CD8-positive, alpha-beta T cell (primary cell): ENCODE measurements at regions of chr11 and their contacts with region 1.

Region 1: DNA sequence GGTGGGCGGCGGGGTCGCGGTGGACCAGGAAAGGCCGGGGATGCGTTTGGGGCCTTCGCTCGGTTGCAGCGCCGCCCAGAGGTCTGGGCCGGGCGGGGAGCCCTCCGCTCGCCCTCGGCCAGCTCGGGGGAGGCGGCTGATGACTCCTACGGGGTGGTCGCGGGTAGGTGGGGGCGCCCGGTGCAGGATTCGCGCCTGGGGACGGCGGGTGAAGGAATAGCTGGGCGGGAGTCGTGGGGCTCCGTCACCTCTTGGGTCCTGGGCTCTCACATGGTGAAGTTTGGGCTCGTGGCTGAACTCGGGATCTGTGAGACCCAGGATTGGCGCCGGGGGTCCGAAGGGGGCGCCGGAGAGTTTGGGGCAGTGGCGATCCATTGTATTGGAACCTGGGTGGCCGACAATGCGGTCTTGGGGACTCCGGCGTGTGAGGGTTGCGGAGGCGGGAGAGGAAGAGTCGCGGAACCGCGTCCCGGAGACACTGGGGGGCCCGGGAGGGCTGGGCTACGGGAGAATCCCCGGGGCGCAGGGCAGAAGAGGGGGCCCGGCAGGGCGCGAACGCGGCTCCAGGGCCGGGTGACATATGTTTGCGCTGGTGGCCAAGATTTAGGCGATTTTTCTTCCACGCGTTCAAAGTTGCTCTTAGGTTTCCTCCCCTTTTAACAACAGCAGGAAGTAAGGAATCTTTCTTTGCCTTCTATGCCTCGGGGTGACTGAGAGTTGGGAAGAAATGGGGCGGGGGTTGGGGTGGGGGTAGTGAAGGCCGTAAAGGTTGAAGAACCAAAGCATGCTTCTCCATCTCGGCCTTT is 935 bp downstream of the QSER1 start:
- DNase-seq: peak in 8 of 9 experiments; percentile 21 to 75 (median 54)
- ATAC-seq: peak; percentile 50
- H3K4me3 ChIP-seq: peak overlapping the region; percentile 79 to 87
- H3K4me3 Mint-ChIP-seq: peak overlapping the region; percentile 92
- H3K27ac ChIP-seq: peak overlapping the region; percentile 36 to 51
- H3K27ac Mint-ChIP-seq: peak overlapping the region; percentile 74
- H3K4me1 ChIP-seq: peaks cover 27% of the 10 kb centered on the region
- H3K4me1 Mint-ChIP-seq: peaks cover 33% of the 10 kb centered on the region
- H3K27me3 ChIP-seq: no peaks in the 10 kb centered on the region
- H3K27me3 Mint-ChIP-seq: no peaks in the 10 kb centered on the region
- CTCF ChIP-seq: peak; percentile 35

Region 2: GRCh38 chr11:31369348-31370329 is 1523.9 kb before region 1 on chr11 and contains the starts of genes DCDC1 and DNAJC24:
- CTCF ChIA-PET with region 1: no interaction called
- POLR2A ChIA-PET with region 1: no interaction called
- intact Hi-C with region 1: loop called (anchors 2 to 10 kb)
- DNase-seq: peak; percentile 84 to 96 (median 94)
- ATAC-seq: peak; percentile 95
- H3K4me3 ChIP-seq: peak within 1 kb of the TSS; percentile 73 to 93
- H3K4me3 Mint-ChIP-seq: peak within 1 kb of the TSS; percentile 100
- H3K27ac ChIP-seq: peak within 1 kb of the TSS; percentile 59 to 84
- H3K27ac Mint-ChIP-seq: peak within 1 kb of the TSS; percentile 98
- H3K4me1 ChIP-seq: peaks cover 30% of the 10 kb centered on the region
- H3K4me1 Mint-ChIP-seq: peaks cover 59% of the 10 kb centered on the region
- H3K27me3 ChIP-seq: peaks cover 0 to 5% of the 10 kb centered on the region in 2 experiments
- H3K27me3 Mint-ChIP-seq: no peaks in the 10 kb centered on the region
- CTCF ChIP-seq: no peak
- total RNA-seq, gene DCDC1: 0.19 TPM in 1 of 2 experiments, not detected in the other
- total RNA-seq, gene DNAJC24: 7.0 to 7.3 TPM

Region 3: DNA sequence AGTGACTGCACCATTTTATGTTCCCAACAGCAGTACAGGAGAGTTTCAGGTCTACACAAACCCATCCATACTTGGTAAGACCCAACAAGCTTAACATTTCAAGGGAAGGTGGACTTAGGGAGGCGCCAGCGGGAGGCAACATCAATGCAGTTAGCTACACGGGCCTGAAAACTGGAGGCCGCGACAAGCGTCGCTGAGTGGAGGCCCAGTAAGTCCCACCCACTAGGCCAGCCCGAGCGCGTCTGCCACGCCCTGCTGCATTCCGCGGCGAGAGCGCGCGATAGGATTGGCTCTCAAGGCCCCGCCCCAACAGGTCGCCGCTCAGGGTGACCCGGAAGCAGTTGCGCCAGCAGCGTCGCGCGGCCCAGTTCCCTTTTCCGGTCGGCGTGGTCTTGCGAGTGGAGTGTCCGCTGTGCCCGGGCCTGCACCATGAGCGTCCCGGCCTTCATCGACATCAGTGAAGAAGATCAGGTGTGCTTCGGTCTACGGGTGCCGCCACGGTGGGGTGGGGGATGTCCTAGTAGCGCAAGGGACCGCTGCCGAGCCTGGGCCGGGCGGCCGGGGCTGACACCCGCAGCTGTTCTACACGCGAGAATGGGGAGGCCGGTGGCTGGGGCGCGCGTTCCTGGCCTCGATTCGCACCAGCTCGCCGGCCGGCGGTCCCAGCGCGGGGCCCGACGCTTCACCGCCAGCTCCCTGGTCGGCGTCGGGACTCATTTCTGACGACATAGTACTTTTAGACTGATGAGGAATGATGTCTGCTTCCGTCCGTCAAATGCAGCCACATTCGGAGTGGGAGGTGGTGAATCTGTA is 309.9 kb before region 1 on chr11 and contains the start of gene EIF3M:
- CTCF ChIA-PET with region 1: no interaction called
- POLR2A ChIA-PET with region 1: interaction called, 4 read pairs
- intact Hi-C with region 1: loop called (anchors 1 to 5 kb)
- DNase-seq: peak; percentile 91 to 98 (median 95)
- ATAC-seq: peak; percentile 98
- H3K4me3 ChIP-seq: peak within 1 kb of the TSS; percentile 80 to 93
- H3K4me3 Mint-ChIP-seq: peak within 1 kb of the TSS; percentile 99
- H3K27ac ChIP-seq: peak within 1 kb of the TSS; percentile 81 to 86
- H3K27ac Mint-ChIP-seq: peak within 1 kb of the TSS; percentile 99
- H3K4me1 ChIP-seq: peaks cover 29% of the 10 kb centered on the region
- H3K4me1 Mint-ChIP-seq: peaks cover 39% of the 10 kb centered on the region
- H3K27me3 ChIP-seq: no peaks in the 10 kb centered on the region
- H3K27me3 Mint-ChIP-seq: no peaks in the 10 kb centered on the region
- CTCF ChIP-seq: no peak
- total RNA-seq, gene EIF3M: 269 to 274 TPM

Region 4: DNA sequence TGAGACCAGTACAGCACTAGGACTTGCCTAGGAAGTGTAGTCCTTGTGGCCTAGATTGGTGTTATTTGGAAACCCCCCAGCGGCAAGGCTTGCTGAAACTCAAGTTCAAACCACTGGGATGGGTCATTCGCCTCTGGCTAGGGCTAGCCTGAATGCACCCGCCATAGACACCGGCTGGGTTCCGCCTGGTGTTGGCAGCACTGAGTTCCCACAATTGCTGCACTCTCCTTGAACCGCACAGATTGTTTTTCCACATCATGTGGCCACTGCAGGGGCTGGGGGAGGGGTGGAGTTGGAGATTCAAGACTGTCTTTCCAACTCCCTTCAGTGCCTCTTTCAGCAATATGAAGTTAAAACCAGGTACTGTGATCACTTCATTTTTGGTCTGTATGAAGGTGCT is 142.2 kb before region 1 on chr11:
- CTCF ChIA-PET with region 1: no interaction called
- POLR2A ChIA-PET with region 1: no interaction called
- intact Hi-C with region 1: no loop called
- DNase-seq: no peak
- ATAC-seq: no peak
- H3K4me3 ChIP-seq: no peak overlapping the region
- H3K4me3 Mint-ChIP-seq: no peak overlapping the region
- H3K27ac ChIP-seq: no peak overlapping the region
- H3K27ac Mint-ChIP-seq: no peak overlapping the region
- H3K4me1 ChIP-seq: no peaks in the 10 kb centered on the region
- H3K4me1 Mint-ChIP-seq: no peaks in the 10 kb centered on the region
- H3K27me3 ChIP-seq: no peaks in the 10 kb centered on the region
- H3K27me3 Mint-ChIP-seq: peaks cover 18% of the 10 kb centered on the region
- CTCF ChIP-seq: no peak

Region 5: GRCh38 chr11:32870676-32871075 is 22.9 kb before region 1 on chr11:
- CTCF ChIA-PET with region 1: no interaction called
- POLR2A ChIA-PET with region 1: no interaction called
- intact Hi-C with region 1: no loop called
- DNase-seq: peak in 7 of 9 experiments; percentile 6 to 52 (median 40)
- ATAC-seq: no peak
- H3K4me3 ChIP-seq: no peak overlapping the region
- H3K4me3 Mint-ChIP-seq: no peak overlapping the region
- H3K27ac ChIP-seq: no peak overlapping the region
- H3K27ac Mint-ChIP-seq: no peak overlapping the region
- H3K4me1 ChIP-seq: no peaks in the 10 kb centered on the region
- H3K4me1 Mint-ChIP-seq: no peaks in the 10 kb centered on the region
- H3K27me3 ChIP-seq: no peaks in the 10 kb centered on the region
- H3K27me3 Mint-ChIP-seq: peaks cover 10% of the 10 kb centered on the region
- CTCF ChIP-seq: peak; percentile 23

Region 6: DNA sequence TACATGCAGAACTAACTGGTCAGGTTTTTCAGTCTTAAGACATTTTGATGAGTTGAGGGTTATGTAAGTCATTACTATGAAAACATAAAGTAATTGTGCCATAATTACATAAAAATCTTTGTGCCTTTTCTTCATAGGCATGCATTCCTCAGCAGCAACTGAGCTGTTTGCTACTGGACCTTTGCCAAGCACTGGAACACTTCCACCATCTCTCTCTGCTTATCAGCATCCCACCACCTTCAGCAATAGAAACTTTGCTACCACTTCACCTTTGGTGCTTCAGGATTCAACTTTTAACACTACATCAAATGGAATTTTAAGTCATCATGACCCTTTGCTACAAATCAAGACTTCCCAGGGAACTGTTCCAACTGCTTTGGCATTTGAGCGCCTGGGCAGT is 38.1 kb after region 1 on chr11:
- CTCF ChIA-PET with region 1: no interaction called
- POLR2A ChIA-PET with region 1: no interaction called
- intact Hi-C with region 1: no loop called
- DNase-seq: no peak
- ATAC-seq: no peak
- H3K4me3 ChIP-seq: no peak overlapping the region
- H3K4me3 Mint-ChIP-seq: no peak overlapping the region
- H3K27ac ChIP-seq: no peak overlapping the region
- H3K27ac Mint-ChIP-seq: no peak overlapping the region
- H3K4me1 ChIP-seq: no peaks in the 10 kb centered on the region
- H3K4me1 Mint-ChIP-seq: no peaks in the 10 kb centered on the region
- H3K27me3 ChIP-seq: no peaks in the 10 kb centered on the region
- H3K27me3 Mint-ChIP-seq: no peaks in the 10 kb centered on the region
- CTCF ChIP-seq: no peak

Region 7: DNA sequence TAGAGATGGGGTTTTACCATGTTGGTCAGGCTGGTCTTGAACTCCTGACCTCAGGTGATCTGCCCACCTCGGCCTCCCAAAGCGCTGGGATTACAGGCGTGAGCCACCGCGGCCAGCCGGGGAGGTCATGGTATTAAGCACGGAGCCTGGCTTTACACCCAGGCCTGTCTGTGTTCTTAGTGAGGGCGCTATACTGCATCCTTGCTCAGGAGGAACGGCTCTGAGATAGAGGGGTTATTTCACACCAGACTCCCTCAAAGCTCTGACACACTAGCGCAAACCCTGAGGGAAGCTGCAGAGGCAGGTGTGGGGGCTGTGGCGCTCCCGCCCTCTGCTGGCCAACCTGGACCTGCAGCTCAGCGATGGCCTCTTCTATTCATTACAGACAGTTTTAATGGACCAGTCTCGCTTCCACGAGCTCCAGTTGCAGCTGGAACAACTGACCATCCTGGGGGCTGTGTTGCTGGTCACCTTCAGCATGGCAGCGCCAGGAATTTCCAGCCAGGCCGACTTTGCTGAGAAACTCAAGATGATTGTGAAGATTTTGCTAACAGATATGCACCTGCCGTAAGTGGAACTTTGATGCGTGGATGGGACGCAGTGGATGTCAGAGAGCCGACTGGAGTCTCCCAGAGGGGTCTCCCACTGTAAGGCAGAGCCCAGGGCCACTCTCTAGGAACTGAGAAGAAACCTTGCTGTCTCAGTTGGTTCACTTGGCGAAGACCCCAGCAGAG is 172.1 kb after region 1 on chr11:
- CTCF ChIA-PET with region 1: interaction called, 8 read pairs
- POLR2A ChIA-PET with region 1: no interaction called
- intact Hi-C with region 1: loop called in 1 of 2 experiments (anchors 5 kb)
- DNase-seq: peak; percentile 48 to 85 (median 76)
- ATAC-seq: peak; percentile 96
- H3K4me3 ChIP-seq: no peak overlapping the region
- H3K4me3 Mint-ChIP-seq: no peak overlapping the region
- H3K27ac ChIP-seq: no peak overlapping the region
- H3K27ac Mint-ChIP-seq: no peak overlapping the region
- H3K4me1 ChIP-seq: peaks cover 25% of the 10 kb centered on the region
- H3K4me1 Mint-ChIP-seq: peaks cover 24% of the 10 kb centered on the region
- H3K27me3 ChIP-seq: no peaks in the 10 kb centered on the region
- H3K27me3 Mint-ChIP-seq: no peaks in the 10 kb centered on the region
- CTCF ChIP-seq: peak; percentile 93

Region 8: DNA sequence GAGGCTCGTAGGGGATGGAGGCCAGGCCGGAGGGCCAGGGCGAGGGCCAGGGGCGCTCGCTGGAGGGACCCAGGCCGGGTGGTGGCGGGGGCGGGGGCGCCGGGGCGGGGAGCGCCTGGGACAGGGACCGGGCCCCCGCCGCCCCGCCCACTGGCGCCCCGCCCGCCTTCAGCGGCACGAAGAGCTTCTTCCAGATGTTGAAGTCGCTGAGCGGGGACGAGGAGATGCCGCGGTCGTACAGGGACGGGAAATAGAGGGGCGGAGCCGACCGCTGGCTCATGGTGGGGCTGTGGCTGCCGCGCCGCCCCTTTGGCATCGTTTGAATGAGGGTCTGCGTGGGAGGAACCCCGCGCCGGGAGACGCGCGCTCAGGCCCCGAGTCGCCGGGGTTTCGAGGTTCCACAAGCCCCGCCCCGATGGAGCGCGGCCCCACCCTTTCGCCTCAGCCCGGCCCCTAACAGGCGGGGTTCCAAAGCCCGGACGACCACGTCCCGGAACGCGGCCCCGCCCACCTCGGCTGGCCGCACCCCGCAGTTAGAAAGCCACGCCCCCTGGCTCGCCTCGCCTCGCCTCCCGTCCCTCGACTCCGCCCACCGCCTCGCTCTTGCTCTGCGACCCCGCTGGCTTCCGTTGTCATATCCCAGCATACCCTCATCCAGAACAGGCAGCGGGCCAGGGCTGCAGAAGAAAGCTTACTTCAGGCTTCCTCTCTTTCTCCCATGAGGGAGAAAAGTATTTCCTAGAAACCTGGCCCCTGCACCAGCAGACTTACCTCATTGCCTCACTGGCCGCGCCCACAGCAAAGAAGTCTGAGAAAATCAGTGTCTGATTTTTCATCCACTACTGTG is 807.1 kb after region 1 on chr11 and contains the start of gene C11orf91:
- CTCF ChIA-PET with region 1: no interaction called
- POLR2A ChIA-PET with region 1: no interaction called
- intact Hi-C with region 1: loop called (anchors 5 kb)
- DNase-seq: peak; percentile 88 to 96 (median 94)
- ATAC-seq: peak; percentile 95
- H3K4me3 ChIP-seq: peak within 1 kb of the TSS; percentile 51 to 68
- H3K4me3 Mint-ChIP-seq: peak within 1 kb of the TSS; percentile 92
- H3K27ac ChIP-seq: no peak within 1 kb of the TSS
- H3K27ac Mint-ChIP-seq: peak within 1 kb of the TSS; percentile 64
- H3K4me1 ChIP-seq: peaks cover 13% of the 10 kb centered on the region
- H3K4me1 Mint-ChIP-seq: peaks cover 25% of the 10 kb centered on the region
- H3K27me3 ChIP-seq: no peaks in the 10 kb centered on the region
- H3K27me3 Mint-ChIP-seq: peaks cover 2% of the 10 kb centered on the region
- CTCF ChIP-seq: no peak
- total RNA-seq, gene C11orf91: 0.54 TPM in 1 of 2 experiments, not detected in the other